H1 (cell line): ENCODE measurements at regions of chr9 and their contacts with region 1.

Region 1: DNA sequence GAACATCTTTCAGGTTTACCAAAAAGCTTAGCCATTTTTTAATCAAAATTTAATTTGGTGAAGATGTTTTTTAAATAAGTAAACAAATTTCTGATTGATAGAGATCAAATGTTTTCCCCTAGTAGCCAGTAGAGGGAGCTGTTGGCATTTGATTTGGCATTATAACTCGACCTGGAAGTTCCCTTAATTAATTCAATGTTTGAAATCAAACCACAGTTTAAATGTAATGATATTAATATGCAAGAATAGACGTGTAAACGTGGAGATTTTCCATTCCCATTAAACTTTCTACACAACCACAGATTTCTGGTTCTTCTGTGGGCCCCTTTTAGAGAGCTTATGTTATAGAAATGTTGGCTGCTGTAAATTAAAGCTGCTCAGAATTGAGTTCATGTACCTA is 148.1 kb upstream of the MPDZ start:
- DNase-seq: no peak
- H3K4me3 ChIP-seq: no peak overlapping the region; a peak in 1 of 8 replicates
- H3K27ac ChIP-seq: no peak overlapping the region
- H3K4me1 ChIP-seq: peaks cover 3 to 23% (median 12%) of the 10 kb centered on the region in 4 experiments
- H3K27me3 ChIP-seq: no peaks in the 10 kb centered on the region
- CTCF ChIP-seq: peak in 2 of 3 experiments; percentile 24 to 46; a peak in 2 of 4 replicates
- EP300 ChIP-seq: no peak
- POLR2A ChIP-seq: no peak
- RAD21 ChIP-seq: peak; percentile 79 to 86

Region 2: GRCh38 chr9:13688994-13689600 is 261.5 kb after region 1 on chr9:
- CTCF ChIA-PET with region 1: interaction called, 23 read pairs
- POLR2A ChIA-PET with region 1: no interaction called
- DNase-seq: no peak
- H3K4me3 ChIP-seq: 0 out of 8 replicates have a peak overlapping the region, but pooled peaks of 1 of the 4 experiments have one; percentile 16
- H3K27ac ChIP-seq: peak overlapping the region; percentile 67
- H3K4me1 ChIP-seq: peaks cover 0 to 7% (median 4%) of the 10 kb centered on the region in 4 experiments; a peak in 3 of 7 replicates
- H3K27me3 ChIP-seq: no peaks in the 10 kb centered on the region
- CTCF ChIP-seq: peak in 2 of 3 experiments; percentile 10 to 31; a peak in 2 of 4 replicates
- EP300 ChIP-seq: no peak
- POLR2A ChIP-seq: no peak
- RAD21 ChIP-seq: peak; percentile 49 to 58; a peak in 3 of 4 replicates

Region 3: DNA sequence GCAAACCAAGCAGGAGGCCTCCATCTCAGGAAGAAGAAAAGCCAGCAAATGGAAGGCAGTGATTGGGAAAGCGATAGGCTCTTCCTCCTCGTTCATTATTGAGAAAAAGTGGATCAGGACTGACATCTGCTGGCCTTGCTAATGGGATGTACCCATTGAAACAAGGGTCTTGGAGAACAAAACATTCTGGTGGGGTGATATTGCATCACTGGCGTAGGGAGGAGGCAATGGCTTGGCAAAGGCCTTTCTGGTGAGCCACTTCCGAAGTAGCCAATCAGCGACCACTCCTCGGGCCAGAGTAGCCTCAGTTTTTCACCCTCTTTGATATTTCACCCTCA is 973.0 kb after region 1 on chr9:
- CTCF ChIA-PET with region 1: interaction called, 10 read pairs
- POLR2A ChIA-PET with region 1: no interaction called
- DNase-seq: peak; percentile 62 to 64
- H3K4me3 ChIP-seq: no peak overlapping the region
- H3K27ac ChIP-seq: no peak overlapping the region
- H3K4me1 ChIP-seq: peaks cover 0 to 7% (median 2%) of the 10 kb centered on the region in 4 experiments; a peak in 2 of 7 replicates
- H3K27me3 ChIP-seq: no peaks in the 10 kb centered on the region
- CTCF ChIP-seq: peak in 2 of 3 experiments; percentile 58 to 67; a peak in 3 of 4 replicates
- EP300 ChIP-seq: peak in 1 of 2 experiments; percentile 49; a peak in 1 of 3 replicates
- POLR2A ChIP-seq: no peak
- RAD21 ChIP-seq: peak; percentile 87 to 91